ENCODE measurements at regions of chr16 and their contacts with region 1.

Region 1: DNA sequence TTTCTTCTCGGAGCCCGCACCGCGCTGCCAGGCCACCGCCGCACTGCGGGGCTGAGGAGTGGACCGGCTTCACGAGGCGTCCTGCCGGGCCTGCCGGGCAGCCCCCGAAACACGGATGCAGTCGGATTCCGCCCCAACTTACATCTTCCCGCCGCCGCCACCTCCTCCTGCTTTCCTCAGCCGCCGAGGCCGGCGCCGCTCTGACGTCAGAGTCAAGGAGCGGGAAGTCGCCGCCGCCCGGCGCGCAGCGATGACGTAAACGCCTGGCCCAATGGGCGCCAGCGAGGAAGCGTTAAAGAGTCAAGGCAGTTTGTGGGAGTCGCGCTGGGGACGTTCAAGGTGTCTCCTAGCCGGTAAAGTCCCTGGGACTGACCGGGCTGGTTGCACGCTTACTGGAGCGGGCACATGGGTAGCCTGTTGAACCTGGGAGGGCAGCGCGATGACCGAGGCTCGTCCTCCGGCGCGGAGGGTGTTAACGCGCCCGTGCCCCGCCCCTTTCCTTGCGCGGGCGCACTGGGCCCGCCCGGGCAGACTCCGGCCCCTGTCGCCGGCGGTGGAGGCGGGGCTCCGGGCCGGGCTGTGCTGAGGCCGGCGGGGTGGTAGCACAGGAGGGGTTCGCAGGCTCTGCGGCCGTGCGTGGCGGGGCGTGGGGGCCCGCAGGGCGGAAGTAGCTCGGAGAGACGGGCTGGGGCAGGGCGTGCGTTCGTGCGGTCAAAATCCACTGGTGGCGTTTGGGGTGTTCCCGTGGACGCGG is at the start of gene RNPS1:
- DNase-seq: peak; percentile 100
- ATAC-seq: peak; percentile 89
- H3K4me3 ChIP-seq: peak within 1 kb of the TSS; percentile 71 to 88 (median 85)
- H3K4me3 Mint-ChIP-seq: peak within 1 kb of the TSS; percentile 96
- H3K27ac ChIP-seq: peak within 1 kb of the TSS; percentile 79 to 91
- H3K27ac Mint-ChIP-seq: peak within 1 kb of the TSS; percentile 99
- H3K4me1 ChIP-seq: peaks cover 18 to 28% of the 10 kb centered on the region in 2 donors
- H3K4me1 Mint-ChIP-seq: peaks cover 47% of the 10 kb centered on the region
- H3K27me3 ChIP-seq: no peaks in the 10 kb centered on the region
- H3K27me3 Mint-ChIP-seq: no peaks in the 10 kb centered on the region
- CTCF ChIP-seq: no peak
- total RNA-seq, gene RNPS1: 209 and 210 TPM in 2 replicates

Region 2: GRCh38 chr16:1959269-1960049 is 308.6 kb before region 1 on chr16 and contains the start of gene NDUFB10:
- CTCF ChIA-PET with region 1: no interaction called
- POLR2A ChIA-PET with region 1: no interaction called
- intact Hi-C with region 1: loop called (anchors 1 kb)
- DNase-seq: peak; percentile 93
- ATAC-seq: peak; percentile 94
- H3K4me3 ChIP-seq: peak within 1 kb of the TSS; percentile 51 to 89 (median 86)
- H3K4me3 Mint-ChIP-seq: peak within 1 kb of the TSS; percentile 89
- H3K27ac ChIP-seq: peak within 1 kb of the TSS; percentile 51 to 77
- H3K27ac Mint-ChIP-seq: peak within 1 kb of the TSS; percentile 89
- H3K4me1 ChIP-seq: peaks cover 24 to 47% of the 10 kb centered on the region in 2 donors
- H3K4me1 Mint-ChIP-seq: peaks cover 38% of the 10 kb centered on the region
- H3K27me3 ChIP-seq: no peaks in the 10 kb centered on the region
- H3K27me3 Mint-ChIP-seq: peaks cover 3% of the 10 kb centered on the region
- CTCF ChIP-seq: peak; percentile 80
- total RNA-seq, gene NDUFB10: 63.7 and 70.4 TPM in 2 replicates

Region 3: DNA sequence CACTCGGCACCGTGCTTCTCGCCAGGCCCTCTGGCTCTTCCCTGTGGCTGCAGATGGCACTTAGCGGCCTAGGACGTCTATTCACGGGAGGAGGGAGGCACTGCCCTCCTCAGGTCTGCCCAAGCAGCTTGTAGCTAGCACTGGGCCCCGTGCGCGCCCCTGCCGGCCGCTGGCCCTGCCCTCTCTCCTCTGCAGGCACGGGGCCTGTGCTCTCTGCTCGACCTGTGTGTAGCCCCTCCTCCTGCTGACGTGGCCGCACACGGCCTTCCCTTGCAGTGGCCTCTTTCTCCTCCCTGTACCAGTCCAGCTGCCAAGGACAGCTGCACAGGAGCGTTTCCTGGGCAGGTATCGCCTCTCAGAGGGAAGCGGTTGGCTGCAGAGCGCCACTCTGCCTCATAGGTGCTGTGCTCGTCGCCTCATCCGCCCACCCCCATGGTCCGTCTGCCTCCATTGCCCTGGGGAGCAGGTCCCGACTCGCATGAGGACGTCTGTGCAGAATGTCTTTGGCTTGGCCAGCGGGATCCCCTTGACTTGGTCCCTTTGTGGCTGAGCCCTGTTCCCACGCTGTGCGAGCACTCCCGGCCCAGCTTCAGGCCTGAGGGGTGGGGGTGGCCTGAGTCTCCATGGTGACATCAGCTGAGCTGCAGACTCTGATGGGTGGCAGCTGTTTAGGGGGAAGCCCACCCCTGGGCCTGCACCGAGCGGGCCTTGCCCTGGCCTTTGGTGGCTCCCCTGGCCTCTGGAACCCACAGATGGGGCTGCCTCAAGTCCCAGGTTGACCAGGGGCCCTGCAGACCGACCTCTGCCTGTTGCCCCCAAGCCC is 185.7 kb before region 1 on chr16:
- CTCF ChIA-PET with region 1: no interaction called
- POLR2A ChIA-PET with region 1: no interaction called
- intact Hi-C with region 1: no loop called
- DNase-seq: no peak
- ATAC-seq: no peak
- H3K4me3 ChIP-seq: no peak overlapping the region
- H3K4me3 Mint-ChIP-seq: no peak overlapping the region
- H3K27ac ChIP-seq: no peak overlapping the region
- H3K27ac Mint-ChIP-seq: no peak overlapping the region
- H3K4me1 ChIP-seq: peaks cover 0 to 12% of the 10 kb centered on the region in 2 donors
- H3K4me1 Mint-ChIP-seq: peaks cover 7% of the 10 kb centered on the region
- H3K27me3 ChIP-seq: no peaks in the 10 kb centered on the region
- H3K27me3 Mint-ChIP-seq: no peaks in the 10 kb centered on the region
- CTCF ChIP-seq: no peak

Region 4: DNA sequence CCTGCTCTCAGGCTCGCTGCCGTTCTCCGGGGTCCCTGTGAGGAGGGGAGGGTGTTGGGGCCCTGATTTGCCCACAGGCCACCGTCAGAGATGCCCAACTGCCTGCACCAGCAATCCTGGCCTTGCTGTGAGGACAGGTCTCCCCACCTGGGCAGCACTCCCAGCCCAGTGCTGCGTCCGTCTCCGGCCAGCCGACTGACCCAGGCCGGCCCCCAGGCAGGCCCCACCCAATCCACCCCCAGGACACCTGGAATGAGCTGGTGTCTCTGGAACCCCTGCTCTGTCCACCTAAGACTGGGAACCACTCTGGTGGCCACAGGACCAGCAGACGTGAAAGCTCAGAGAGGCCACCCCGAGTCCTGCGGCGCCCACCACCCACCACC is 152.5 kb before region 1 on chr16:
- CTCF ChIA-PET with region 1: no interaction called
- POLR2A ChIA-PET with region 1: no interaction called
- intact Hi-C with region 1: no loop called
- DNase-seq: no peak
- ATAC-seq: no peak
- H3K4me3 ChIP-seq: no peak overlapping the region
- H3K4me3 Mint-ChIP-seq: no peak overlapping the region
- H3K27ac ChIP-seq: no peak overlapping the region
- H3K27ac Mint-ChIP-seq: no peak overlapping the region
- H3K4me1 ChIP-seq: no peaks in the 10 kb centered on the region
- H3K4me1 Mint-ChIP-seq: no peaks in the 10 kb centered on the region
- H3K27me3 ChIP-seq: no peaks in the 10 kb centered on the region
- H3K27me3 Mint-ChIP-seq: no peaks in the 10 kb centered on the region
- CTCF ChIP-seq: no peak

Region 5: GRCh38 chr16:2194852-2195321 is 73.2 kb before region 1 on chr16:
- CTCF ChIA-PET with region 1: interaction called, 10 read pairs
- POLR2A ChIA-PET with region 1: no interaction called
- intact Hi-C with region 1: no loop called
- DNase-seq: peak; percentile 77
- ATAC-seq: peak; percentile 73
- H3K4me3 ChIP-seq: peak overlapping the region in 1 of 5 experiments; percentile 44
- H3K4me3 Mint-ChIP-seq: peak overlapping the region; percentile 78
- H3K27ac ChIP-seq: no peak overlapping the region
- H3K27ac Mint-ChIP-seq: peak overlapping the region; percentile 37
- H3K4me1 ChIP-seq: peaks cover 12 to 22% of the 10 kb centered on the region in 2 donors
- H3K4me1 Mint-ChIP-seq: peaks cover 10% of the 10 kb centered on the region
- H3K27me3 ChIP-seq: peaks cover 0 to 50% (median 20%) of the 10 kb centered on the region in 4 experiments
- H3K27me3 Mint-ChIP-seq: peaks cover 28% of the 10 kb centered on the region
- CTCF ChIP-seq: peak; percentile 47

Region 6: DNA sequence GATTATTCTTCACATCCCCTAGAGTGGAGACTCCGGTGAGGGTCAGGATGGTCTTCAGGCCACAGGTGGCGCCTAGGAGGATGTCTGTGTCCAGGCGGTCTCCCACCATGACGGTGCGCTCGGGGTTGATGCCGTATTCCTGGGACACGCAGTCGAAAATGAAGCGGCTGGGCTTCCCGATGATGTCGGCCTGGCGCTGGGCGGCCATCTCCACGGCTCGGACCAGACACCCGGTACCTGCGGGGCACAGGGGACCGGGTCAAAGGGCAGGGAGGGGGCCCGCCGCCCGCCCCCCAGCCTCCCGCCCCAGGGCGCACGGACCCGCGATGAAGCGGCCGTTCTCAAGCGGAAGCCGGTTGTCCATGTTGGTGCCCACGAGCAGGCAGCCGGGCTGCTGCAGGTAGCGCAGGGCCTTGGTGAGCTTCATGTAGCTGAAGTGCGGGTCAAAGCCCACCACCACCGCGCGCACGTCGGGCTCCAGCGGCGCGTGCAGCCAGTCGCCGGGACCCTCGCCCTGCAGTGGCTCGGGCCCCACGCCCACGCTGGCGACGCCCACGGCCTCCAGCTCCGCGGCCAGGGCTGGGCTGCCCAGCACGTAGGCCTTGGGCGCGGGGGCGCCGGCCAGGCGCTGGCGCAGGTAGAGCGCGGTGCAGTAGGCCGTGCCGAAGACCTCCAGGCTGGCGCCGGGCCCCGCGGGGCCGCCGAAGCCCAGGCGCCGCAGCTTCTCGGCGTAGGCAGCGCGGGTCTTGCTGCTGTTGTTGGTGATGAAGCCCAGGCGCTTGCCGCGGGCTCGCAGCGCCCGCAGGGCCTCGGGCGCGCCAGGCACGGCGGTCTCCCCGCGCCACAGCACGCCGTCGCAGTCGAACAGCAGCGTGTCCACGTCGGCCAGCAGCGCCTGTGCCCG is 54.0 kb before region 1 on chr16:
- CTCF ChIA-PET with region 1: no interaction called
- POLR2A ChIA-PET with region 1: no interaction called
- intact Hi-C with region 1: loop called (anchors 2 kb)
- DNase-seq: no peak
- ATAC-seq: no peak
- H3K4me3 ChIP-seq: peak overlapping the region; percentile 17 to 69 (median 57)
- H3K4me3 Mint-ChIP-seq: peak overlapping the region; percentile 78
- H3K27ac ChIP-seq: no peak overlapping the region
- H3K27ac Mint-ChIP-seq: no peak overlapping the region
- H3K4me1 ChIP-seq: peaks cover 10 to 18% of the 10 kb centered on the region in 2 donors
- H3K4me1 Mint-ChIP-seq: peaks cover 16% of the 10 kb centered on the region
- H3K27me3 ChIP-seq: no peaks in the 10 kb centered on the region
- H3K27me3 Mint-ChIP-seq: no peaks in the 10 kb centered on the region
- CTCF ChIP-seq: no peak

Region 7: GRCh38 chr16:2251483-2252240 is 16.4 kb before region 1 on chr16 and contains the start of gene ECI1:
- CTCF ChIA-PET with region 1: interaction called, 6 read pairs
- POLR2A ChIA-PET with region 1: interaction called, 13 read pairs
- intact Hi-C with region 1: loop called (anchors 1 kb)
- DNase-seq: peak; percentile 92
- ATAC-seq: peak; percentile 96
- H3K4me3 ChIP-seq: peak within 1 kb of the TSS; percentile 51 to 82 (median 68)
- H3K4me3 Mint-ChIP-seq: peak within 1 kb of the TSS; percentile 88
- H3K27ac ChIP-seq: peak within 1 kb of the TSS; percentile 68 to 72
- H3K27ac Mint-ChIP-seq: peak within 1 kb of the TSS; percentile 89
- H3K4me1 ChIP-seq: peaks cover 12 to 41% of the 10 kb centered on the region in 2 donors
- H3K4me1 Mint-ChIP-seq: peaks cover 26% of the 10 kb centered on the region
- H3K27me3 ChIP-seq: no peaks in the 10 kb centered on the region
- H3K27me3 Mint-ChIP-seq: no peaks in the 10 kb centered on the region
- CTCF ChIP-seq: peak; percentile 58
- total RNA-seq, gene ECI1: 38.4 and 46.4 TPM in 2 replicates

Region 8: DNA sequence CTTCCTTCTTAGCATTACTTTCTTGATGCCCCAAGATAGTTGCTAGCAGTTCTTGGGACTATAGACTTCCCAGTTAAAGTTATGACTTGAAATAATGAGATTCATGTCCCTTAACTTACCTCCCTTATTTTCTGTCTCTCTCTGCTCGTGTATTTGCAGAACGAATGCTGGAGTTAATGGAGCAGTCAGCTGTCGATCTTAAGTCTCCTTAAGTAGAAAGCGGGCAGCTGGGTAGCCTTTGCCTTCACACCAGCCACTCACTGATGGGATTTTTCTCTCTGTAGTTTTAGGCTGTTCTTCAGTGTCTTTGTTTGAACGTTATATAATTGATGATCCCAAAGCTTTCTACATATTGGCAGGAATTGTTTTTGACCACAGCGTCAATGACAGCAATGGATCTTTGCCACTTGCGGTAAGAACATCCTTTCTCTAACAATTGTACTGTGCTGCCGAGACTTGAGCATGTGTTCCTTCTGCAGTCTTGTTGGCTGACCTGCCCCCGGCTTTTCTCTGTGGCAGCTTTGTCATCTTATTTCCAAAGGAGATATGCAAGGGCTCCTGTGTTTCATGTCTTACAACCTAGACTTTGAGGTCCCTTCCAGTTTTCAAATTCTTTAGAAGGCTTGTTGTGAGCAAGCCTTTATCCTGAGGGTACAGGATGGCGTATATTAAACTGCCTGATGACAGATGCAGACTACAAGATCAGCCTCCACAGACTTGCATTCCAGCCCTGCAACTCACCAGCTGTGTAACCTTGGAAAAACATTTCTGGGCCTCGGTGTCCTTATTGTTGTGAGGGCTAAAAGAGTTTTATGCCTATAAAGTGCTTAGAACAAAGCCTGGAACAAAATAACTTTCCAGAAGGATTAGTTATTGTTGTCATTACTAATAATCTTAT is 97.6 kb after region 1 on chr16:
- CTCF ChIA-PET with region 1: no interaction called
- POLR2A ChIA-PET with region 1: no interaction called
- intact Hi-C with region 1: no loop called
- DNase-seq: no peak
- ATAC-seq: no peak
- H3K4me3 ChIP-seq: no peak overlapping the region
- H3K4me3 Mint-ChIP-seq: no peak overlapping the region
- H3K27ac ChIP-seq: no peak overlapping the region
- H3K27ac Mint-ChIP-seq: no peak overlapping the region
- H3K4me1 ChIP-seq: no peaks in the 10 kb centered on the region
- H3K4me1 Mint-ChIP-seq: no peaks in the 10 kb centered on the region
- H3K27me3 ChIP-seq: peaks cover 0 to 12% (median 5%) of the 10 kb centered on the region in 4 experiments
- H3K27me3 Mint-ChIP-seq: peaks cover 47% of the 10 kb centered on the region
- CTCF ChIP-seq: no peak

Region 9: DNA sequence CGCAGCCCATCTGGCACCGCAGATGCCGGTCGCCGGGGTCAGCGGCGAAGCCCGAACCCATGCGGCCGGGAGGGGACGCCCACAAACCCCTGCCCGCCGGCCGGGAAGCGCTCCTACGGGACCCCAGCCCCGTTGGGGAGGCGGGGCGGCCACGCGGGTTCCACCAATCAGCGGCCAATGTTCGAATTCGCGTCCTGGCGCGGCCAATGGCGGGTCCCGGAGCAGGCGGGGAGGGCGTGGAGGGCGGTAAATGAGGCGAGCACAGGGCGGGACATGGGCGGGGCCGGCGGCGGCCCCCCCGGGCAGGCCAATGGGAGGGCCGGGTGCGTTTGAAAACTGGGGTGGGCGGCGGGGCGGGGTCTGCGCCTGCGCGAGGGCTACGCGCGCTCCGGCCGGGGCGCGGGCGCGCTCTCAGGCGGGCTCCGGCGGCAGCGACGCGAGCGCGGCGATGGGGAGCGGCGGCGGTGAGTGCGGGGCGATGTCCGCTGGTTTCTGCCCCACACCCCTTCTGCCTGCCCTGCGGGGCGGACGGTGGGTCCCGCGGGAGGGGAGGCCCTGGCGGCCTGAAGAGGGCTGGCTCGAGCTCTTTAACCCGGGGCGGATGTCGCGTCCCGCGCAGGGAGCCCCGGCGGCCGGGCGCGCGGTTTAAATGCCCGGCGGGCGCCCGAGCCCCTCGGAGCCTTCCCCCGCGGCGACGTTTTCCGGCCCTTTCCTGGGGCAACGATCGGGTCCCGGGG is 161.1 kb after region 1 on chr16 and contains the start of gene CCNF:
- CTCF ChIA-PET with region 1: no interaction called
- POLR2A ChIA-PET with region 1: no interaction called
- intact Hi-C with region 1: loop called (anchors 1 kb)
- DNase-seq: peak; percentile 98
- ATAC-seq: peak; percentile 97
- H3K4me3 ChIP-seq: peak within 1 kb of the TSS; percentile 45 to 84 (median 77)
- H3K4me3 Mint-ChIP-seq: peak within 1 kb of the TSS; percentile 96
- H3K27ac ChIP-seq: peak within 1 kb of the TSS in 1 of 2 donors; percentile 53
- H3K27ac Mint-ChIP-seq: peak within 1 kb of the TSS; percentile 85
- H3K4me1 ChIP-seq: peaks cover 9 to 17% of the 10 kb centered on the region in 2 donors
- H3K4me1 Mint-ChIP-seq: peaks cover 13% of the 10 kb centered on the region
- H3K27me3 ChIP-seq: no peaks in the 10 kb centered on the region
- H3K27me3 Mint-ChIP-seq: no peaks in the 10 kb centered on the region
- CTCF ChIP-seq: no peak
- total RNA-seq, gene CCNF: 4.1 and 5.3 TPM in 2 replicates